ENCODE measurements at regions of chr17 and their contacts with region 1.

Region 1: DNA sequence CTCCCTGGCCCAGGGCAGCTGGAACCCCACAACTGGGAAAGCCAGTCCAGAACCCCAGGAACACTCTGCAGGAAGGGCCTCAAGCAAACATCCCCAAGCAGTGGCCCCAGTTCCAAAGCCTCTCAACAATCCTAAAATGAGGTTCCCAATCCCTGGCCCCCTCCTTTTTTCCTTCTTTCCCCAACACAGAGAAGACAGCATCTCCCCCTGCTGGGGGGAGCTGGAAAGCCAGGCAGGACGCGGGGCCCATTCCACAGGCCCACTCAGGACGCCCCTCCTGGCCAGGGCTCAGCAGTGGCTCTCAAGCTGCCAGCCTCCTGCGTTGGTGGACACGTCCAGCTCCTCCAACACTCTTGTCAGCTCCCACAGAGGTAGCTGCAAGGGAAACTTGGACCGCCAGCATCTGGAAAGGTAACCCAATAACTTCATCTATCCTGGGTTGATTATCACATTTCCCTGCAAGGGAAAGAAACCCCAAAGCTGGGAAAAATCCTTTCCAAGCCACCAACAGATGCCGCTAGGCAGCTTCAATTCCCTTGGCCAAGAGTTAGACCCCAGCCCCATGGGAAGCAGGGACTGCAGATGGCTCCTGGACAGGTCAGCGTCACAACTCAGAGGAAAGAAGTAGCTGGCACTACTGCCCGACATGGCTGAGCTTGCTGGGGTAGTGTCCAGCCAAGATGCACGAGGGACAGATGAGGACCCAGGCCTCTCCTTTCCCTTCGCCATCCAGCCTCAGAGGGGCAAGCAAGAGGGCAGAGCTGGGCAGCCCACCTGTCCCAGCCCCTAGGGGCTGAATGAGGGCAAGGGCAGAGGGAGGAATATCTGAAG is 7.6 kb downstream of the HDAC5 start:
- DNase-seq: peak; percentile 43
- ATAC-seq: peak; percentile 66
- H3K4me3 ChIP-seq: no peak overlapping the region
- H3K27ac ChIP-seq: no peak overlapping the region
- H3K4me1 ChIP-seq: peaks cover 10% of the 10 kb centered on the region
- H3K27me3 ChIP-seq: no peaks in the 10 kb centered on the region
- CTCF ChIP-seq: peak; percentile 92
- POLR2A ChIP-seq: no peak
- RAD21 ChIP-seq: peak; percentile 82

Region 2: GRCh38 chr17:43946069-43946696 is 169.6 kb before region 1 on chr17:
- CTCF ChIA-PET with region 1: no interaction called
- POLR2A ChIA-PET with region 1: no interaction called
- dilution Hi-C with region 1: no loop called
- in situ Hi-C with region 1: no loop called
- intact Hi-C with region 1: loop called (anchors 2 kb)
- DNase-seq: no peak
- ATAC-seq: no peak
- H3K4me3 ChIP-seq: no peak overlapping the region
- H3K27ac ChIP-seq: no peak overlapping the region
- H3K4me1 ChIP-seq: no peaks in the 10 kb centered on the region
- H3K27me3 ChIP-seq: peaks cover 22% of the 10 kb centered on the region
- CTCF ChIP-seq: no peak
- POLR2A ChIP-seq: no peak
- RAD21 ChIP-seq: no peak

Region 3: DNA sequence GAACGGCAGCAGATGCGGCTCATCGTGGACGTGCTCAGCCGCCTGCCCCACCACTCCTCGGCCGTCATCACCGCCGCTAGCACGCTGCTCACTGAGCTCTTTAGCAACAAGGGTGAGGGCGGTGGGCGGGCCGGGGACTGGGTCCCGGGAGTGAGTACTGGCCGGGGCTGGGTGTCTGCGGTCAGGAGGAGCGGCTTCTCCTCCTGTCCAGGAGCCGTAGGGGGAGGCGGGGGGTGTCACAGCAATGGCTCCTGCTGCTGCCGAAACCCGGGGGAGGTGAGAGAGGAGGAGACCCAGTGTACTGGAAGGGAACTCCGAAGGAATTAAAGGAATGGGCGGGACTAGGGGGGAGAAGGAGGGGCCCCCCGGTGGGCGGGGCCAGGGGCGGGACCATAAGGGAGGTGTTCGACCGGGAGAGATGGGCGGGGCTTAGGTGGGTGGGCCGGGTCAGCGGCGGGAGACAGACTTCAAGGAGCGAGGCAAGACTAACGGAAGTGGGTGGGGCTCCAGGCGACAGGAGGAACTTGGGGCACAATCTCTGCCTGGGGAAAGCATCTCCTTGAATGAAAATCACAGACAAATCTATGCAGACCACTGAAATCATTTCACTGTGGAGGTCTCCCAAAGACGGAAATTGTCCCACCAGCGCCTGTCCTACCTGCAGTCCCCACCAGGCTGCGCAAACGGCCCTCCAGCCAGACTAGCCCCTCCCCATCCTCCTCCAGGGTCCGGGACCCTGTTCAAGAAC is 109.0 kb before region 1 on chr17:
- CTCF ChIA-PET with region 1: no interaction called
- POLR2A ChIA-PET with region 1: no interaction called
- dilution Hi-C with region 1: no loop called
- in situ Hi-C with region 1: no loop called
- intact Hi-C with region 1: loop called (anchors 1 kb)
- DNase-seq: peak; percentile 92
- ATAC-seq: peak; percentile 91
- H3K4me3 ChIP-seq: peak overlapping the region; percentile 59
- H3K27ac ChIP-seq: peak overlapping the region; percentile 59
- H3K4me1 ChIP-seq: peaks cover 23% of the 10 kb centered on the region
- H3K27me3 ChIP-seq: peaks cover 3% of the 10 kb centered on the region; the same call in 1 of the 2 replicates
- CTCF ChIP-seq: peak; percentile 70
- POLR2A ChIP-seq: 0 out of 2 replicates have a peak, but pooled peaks have one; percentile 50
- RAD21 ChIP-seq: peak; percentile 59

Region 4: GRCh38 chr17:44044067-44044466 is 71.7 kb before region 1 on chr17:
- CTCF ChIA-PET with region 1: interaction called, 10 read pairs
- POLR2A ChIA-PET with region 1: no interaction called
- dilution Hi-C with region 1: no loop called
- in situ Hi-C with region 1: no loop called
- intact Hi-C with region 1: loop called (anchors 1 kb)
- DNase-seq: peak; percentile 65
- ATAC-seq: no peak; the same call in 1 of the 2 replicates
- H3K4me3 ChIP-seq: no peak overlapping the region
- H3K27ac ChIP-seq: peak overlapping the region; percentile 57; the same call in 1 of the 2 replicates
- H3K4me1 ChIP-seq: peaks cover 12% of the 10 kb centered on the region
- H3K27me3 ChIP-seq: no peaks in the 10 kb centered on the region
- CTCF ChIP-seq: no peak
- POLR2A ChIP-seq: no peak
- RAD21 ChIP-seq: no peak

Region 5: GRCh38 chr17:45051060-45051719 is 935.4 kb after region 1 on chr17 and contains the start of gene DCAKD:
- CTCF ChIA-PET with region 1: no interaction called
- POLR2A ChIA-PET with region 1: no interaction called
- dilution Hi-C with region 1: no loop called
- in situ Hi-C with region 1: no loop called
- intact Hi-C with region 1: no loop called
- DNase-seq: peak; percentile 95
- ATAC-seq: peak; percentile 99
- H3K4me3 ChIP-seq: peak within 1 kb of the TSS; percentile 75
- H3K27ac ChIP-seq: peak within 1 kb of the TSS; percentile 99
- H3K4me1 ChIP-seq: peaks cover 6% of the 10 kb centered on the region; the same call in 1 of the 2 replicates
- H3K27me3 ChIP-seq: no peaks in the 10 kb centered on the region
- CTCF ChIP-seq: no peak
- POLR2A ChIP-seq: peak; percentile 89
- RAD21 ChIP-seq: no peak
- total RNA-seq, gene DCAKD: 42.5 and 47.9 TPM in 2 replicates